Activated CD8-positive, alpha-beta T cell treated with anti-CD3 and anti-CD28 coated beads, Interleukin-2, amount 10 ng/mL, durations not matched to agents 7 days and 5 days (primary cell): ENCODE measurements at regions of chr11 and their contacts with region 1.

Region 1: DNA sequence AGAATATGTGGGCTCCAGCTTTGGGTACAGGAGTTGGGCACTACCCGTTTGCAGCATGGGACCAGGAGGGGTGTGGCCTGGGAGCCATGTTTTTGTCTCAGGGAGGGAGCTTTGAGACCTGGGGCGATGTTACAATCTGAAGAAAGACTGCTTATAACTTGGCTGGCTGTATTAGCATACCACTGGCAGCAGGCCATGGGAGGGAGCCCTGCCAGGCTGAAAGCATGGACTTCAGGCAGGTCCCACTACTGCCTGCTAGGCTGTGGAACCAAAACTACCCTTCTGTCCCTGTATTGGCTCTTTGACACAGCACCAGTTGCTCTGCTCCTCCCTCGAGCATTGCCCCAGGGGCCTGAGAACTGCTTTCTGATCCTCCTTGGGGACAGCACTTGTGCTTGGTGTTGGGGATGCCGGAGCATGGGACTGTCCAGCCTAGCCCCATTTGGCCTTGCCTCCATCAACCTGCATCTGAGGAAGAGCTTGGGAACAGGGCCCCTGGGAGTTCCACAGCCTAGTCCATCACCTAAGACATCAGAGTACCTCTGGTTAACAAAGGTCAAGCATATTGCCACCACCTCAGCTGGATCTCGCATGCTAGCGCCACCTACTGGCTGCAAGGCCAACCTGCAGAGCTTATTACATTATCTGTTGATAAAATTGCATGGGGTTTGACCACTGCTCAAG is 217.4 kb downstream of the SBF2 start:
- DNase-seq: peak; percentile 38
- ATAC-seq: no peak
- H3K4me3 Mint-ChIP-seq: no peak overlapping the region
- H3K27ac Mint-ChIP-seq: no peak overlapping the region
- H3K4me1 Mint-ChIP-seq: no peaks in the 10 kb centered on the region
- H3K27me3 Mint-ChIP-seq: no peaks in the 10 kb centered on the region

Region 2: DNA sequence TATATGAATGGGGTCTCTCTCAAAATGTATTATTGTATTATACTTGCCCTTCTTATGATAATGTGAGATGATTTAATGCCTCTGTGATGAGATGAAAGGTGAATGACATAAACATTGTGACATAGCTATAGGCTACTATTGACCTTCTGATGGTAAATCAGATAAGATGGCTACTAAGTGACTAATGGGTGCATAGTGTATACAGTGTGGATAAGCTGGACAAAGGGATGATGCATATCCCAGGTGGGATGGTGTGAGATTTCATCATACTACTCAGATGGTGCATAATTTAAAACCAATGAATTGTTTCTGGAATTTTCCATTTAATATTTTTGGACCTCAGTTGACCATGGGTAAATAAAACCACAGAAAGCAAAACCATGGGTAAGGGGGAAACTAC is 26.0 kb before region 1 on chr11:
- CTCF ChIA-PET with region 1: interaction called, 10 read pairs
- POLR2A ChIA-PET with region 1: no interaction called
- DNase-seq: no peak
- ATAC-seq: no peak
- H3K4me3 Mint-ChIP-seq: no peak overlapping the region
- H3K27ac Mint-ChIP-seq: no peak overlapping the region
- H3K4me1 Mint-ChIP-seq: no peaks in the 10 kb centered on the region
- H3K27me3 Mint-ChIP-seq: no peaks in the 10 kb centered on the region

Region 3: DNA sequence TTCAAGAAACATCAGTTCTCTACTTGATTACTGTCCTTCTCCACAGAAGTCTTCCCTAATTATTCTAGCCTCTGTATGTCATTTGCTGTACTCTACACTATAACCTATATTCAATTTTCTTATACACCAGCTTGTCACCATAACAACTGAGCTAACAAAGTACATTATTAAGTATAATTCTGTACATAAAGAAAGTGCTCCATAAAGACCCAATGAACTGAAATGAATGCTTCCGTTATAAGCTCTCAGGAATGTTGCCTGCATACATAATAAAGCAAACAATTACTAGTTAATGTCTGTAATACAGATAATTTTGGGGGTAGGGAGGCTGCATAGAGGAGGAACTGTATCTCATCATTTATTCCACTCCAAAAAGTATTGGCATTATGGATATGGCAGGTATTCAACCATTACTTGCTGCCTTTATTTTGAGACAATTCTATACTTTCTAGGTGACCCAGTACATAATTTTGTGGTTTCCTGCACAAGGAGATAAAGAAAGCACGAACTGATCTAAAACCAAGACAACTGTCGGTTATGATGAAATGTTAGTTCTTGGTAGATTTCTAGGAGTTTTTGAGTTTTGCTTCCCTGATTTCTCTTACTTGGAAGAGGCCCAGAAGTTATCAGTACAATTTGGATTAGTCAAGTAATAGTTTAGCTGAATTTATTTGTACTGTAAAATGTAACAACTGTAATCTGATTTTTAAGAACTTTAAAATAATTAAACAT is 14.9 kb after region 1 on chr11:
- CTCF ChIA-PET with region 1: interaction called, 16 read pairs
- POLR2A ChIA-PET with region 1: no interaction called
- DNase-seq: no peak
- ATAC-seq: no peak
- H3K4me3 Mint-ChIP-seq: no peak overlapping the region
- H3K27ac Mint-ChIP-seq: no peak overlapping the region
- H3K4me1 Mint-ChIP-seq: peaks cover 13% of the 10 kb centered on the region
- H3K27me3 Mint-ChIP-seq: no peaks in the 10 kb centered on the region